Activated naive CD4-positive, alpha-beta T cell treated with anti-CD3 and anti-CD28 coated beads, Interleukin-2, amount 10 ng/mL, durations not matched to agents 7 days and 5 days (primary cell): ENCODE measurements at regions of chr6 and their contacts with region 1.

Region 1: GRCh38 chr6:36759148-36759759 is 61.6 kb downstream of the RAB44 start:
- DNase-seq: peak; percentile 85
- H3K4me3 Mint-ChIP-seq: no peak overlapping the region
- H3K27ac Mint-ChIP-seq: no peak overlapping the region
- H3K4me1 Mint-ChIP-seq: peaks cover 46% of the 10 kb centered on the region
- H3K27me3 Mint-ChIP-seq: peaks cover 9% of the 10 kb centered on the region

Region 2: GRCh38 chr6:36615018-36615761 is 144.1 kb before region 1 on chr6:
- CTCF ChIA-PET with region 1: interaction called, 69 read pairs
- DNase-seq: peak; percentile 52
- H3K4me3 Mint-ChIP-seq: no peak overlapping the region
- H3K27ac Mint-ChIP-seq: no peak overlapping the region
- H3K4me1 Mint-ChIP-seq: peaks cover 17% of the 10 kb centered on the region
- H3K27me3 Mint-ChIP-seq: no peaks in the 10 kb centered on the region

Region 3: DNA sequence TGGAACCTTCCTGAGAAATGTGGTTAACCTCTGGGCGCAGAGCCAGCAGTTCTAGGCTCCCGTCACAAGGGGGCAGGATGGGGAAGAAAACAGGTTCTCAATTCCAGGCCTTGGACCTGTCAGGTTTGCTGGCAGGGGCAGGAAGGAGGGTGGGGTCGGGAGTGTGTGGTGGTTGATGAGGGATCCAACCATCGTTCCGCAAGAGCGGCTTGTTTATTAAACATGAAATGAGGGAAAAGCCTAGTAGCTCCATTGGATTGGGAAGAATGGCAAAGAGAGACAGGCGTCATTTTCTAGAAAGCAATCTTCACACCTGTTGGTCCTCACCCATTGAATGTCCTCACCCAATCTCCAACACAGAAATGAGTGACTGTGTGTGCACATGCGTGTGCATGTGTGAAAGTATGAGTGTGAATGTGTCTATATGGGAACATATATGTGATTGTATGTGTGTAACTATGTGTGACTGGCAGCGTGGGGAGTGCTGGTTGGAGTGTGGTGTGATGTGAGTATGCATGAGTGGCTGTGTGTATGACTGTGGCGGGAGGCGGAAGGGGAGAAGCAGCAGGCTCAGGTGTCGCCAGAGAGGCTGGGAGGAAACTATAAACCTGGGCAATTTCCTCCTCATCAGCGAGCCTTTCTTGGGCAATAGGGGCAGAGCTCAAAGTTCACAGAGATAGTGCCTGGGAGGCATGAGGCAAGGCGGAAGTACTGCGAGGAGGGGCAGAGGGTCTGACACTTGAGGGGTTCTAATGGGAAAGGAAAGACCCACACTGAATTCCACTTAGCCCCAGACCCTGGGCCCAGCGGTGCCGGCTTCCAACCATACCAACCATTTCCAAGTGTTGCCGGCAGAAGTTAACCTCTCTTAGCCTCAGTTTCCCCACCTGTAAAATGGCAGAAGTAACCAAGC is 135.5 kb before region 1 on chr6:
- CTCF ChIA-PET with region 1: interaction called, 33 read pairs
- DNase-seq: peak; percentile 86
- H3K4me3 Mint-ChIP-seq: no peak overlapping the region
- H3K27ac Mint-ChIP-seq: peak overlapping the region; percentile 60
- H3K4me1 Mint-ChIP-seq: peaks cover 35% of the 10 kb centered on the region
- H3K27me3 Mint-ChIP-seq: peaks cover 3% of the 10 kb centered on the region

Region 4: DNA sequence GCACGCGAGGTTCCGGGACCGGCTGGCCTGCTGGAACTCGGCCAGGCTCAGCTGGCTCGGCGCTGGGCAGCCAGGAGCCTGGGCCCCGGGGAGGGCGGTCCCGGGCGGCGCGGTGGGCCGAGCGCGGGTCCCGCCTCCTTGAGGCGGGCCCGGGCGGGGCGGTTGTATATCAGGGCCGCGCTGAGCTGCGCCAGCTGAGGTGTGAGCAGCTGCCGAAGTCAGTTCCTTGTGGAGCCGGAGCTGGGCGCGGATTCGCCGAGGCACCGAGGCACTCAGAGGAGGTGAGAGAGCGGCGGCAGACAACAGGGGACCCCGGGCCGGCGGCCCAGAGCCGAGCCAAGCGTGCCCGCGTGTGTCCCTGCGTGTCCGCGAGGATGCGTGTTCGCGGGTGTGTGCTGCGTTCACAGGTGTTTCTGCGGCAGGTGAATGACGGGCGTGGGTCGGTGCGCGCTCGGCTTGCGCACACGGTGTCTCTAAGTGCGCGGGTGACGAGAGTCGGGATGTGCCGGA is 80.7 kb before region 1 on chr6 and contains the start of gene CDKN1A:
- CTCF ChIA-PET with region 1: interaction called, 30 read pairs
- DNase-seq: peak; percentile 86
- H3K4me3 Mint-ChIP-seq: peak within 1 kb of the TSS; percentile 95
- H3K27ac Mint-ChIP-seq: peak within 1 kb of the TSS; percentile 95
- H3K4me1 Mint-ChIP-seq: peaks cover 70% of the 10 kb centered on the region
- H3K27me3 Mint-ChIP-seq: peaks cover 42% of the 10 kb centered on the region

Region 5: DNA sequence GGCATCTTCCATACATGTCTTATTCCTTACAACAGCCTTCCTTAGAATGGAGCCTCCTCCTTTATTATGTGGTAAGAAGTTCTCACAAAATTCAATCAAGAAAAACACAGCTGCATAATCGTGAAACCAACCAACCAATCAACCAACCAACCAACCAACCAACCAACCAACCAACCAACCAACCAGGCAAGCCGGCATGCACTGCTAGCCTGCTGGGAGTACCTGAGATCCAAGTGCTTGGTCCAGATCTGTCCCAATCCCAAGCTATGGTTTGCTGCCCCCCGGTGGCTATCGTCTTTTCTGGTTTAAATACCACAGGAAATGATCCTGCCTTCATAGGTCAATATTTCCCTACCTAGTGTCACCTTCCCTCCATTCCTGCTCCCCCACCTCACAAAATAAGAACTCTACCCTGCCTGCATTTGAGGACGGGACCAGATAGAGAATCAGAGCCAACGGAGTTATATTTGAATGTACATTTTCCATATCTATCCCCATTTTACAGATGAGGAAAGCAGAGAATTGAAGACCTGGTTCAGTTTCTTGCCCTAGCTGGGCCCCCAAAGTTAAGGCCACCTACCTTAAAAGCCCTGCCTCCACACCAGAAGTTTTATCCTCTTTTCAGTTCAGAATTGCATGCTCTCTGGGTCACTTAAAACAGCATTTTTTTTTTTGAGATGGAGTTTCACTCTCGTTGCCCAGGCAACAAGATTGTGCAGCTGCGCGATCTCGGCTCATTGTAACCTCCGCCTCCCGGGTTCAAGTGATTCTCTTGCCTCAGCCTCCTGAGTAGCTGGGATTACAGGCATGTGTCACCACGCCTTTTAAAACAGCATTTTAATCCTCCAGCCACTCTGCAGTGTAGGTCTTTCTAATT is 34.5 kb before region 1 on chr6:
- CTCF ChIA-PET with region 1: interaction called, 41 read pairs
- DNase-seq: peak; percentile 76
- H3K4me3 Mint-ChIP-seq: no peak overlapping the region
- H3K27ac Mint-ChIP-seq: no peak overlapping the region
- H3K4me1 Mint-ChIP-seq: peaks cover 40% of the 10 kb centered on the region
- H3K27me3 Mint-ChIP-seq: peaks cover 24% of the 10 kb centered on the region

Region 6: DNA sequence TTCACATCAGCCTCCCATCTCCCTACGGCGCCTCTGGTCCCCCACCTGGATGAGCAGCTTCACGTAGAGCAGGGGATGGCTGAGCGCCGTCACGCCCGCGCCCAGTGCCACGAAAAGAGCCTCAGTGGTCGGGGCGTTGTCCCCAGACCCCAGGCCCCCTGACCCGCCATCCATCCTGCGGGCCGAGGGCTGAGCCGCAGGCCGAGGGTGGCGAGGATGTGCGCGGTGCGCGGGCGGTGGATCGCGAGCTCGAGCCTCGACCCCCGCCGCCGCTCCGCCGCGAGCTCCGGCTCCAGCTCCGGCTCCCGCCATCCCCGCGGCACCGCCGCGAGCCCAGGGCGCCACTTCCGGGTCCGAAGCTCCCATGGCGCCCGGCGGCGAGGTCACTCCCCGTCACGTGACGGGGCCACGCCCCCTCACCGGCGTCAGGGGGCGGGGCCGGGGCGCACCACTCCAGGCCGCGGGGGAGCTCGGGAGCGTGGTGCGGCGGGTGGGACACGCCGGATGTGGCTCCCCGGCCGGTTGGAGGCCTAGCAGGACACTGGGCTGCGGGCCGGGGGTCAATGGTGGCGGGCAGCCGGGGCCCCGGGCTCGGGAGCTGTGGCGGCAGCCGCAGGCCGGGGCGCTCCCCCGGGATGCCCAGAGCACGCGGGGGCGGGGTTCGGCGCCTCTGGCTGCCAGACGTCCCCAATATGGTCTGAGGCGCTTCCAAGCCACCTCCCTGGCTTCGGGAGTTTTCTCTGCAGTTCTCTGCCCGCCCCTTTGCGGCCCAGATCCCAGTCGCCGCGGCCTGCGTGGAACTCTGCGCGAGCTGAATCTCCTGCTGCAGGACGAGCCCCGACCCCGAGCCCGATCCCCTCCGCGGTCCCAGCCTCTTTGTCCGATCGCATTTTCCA is 226.8 kb after region 1 on chr6 and contains the start of gene MTCH1:
- CTCF ChIA-PET with region 1: no interaction called
- DNase-seq: peak; percentile 88
- H3K4me3 Mint-ChIP-seq: peak within 1 kb of the TSS; percentile 91
- H3K27ac Mint-ChIP-seq: peak within 1 kb of the TSS; percentile 95
- H3K4me1 Mint-ChIP-seq: peaks cover 24% of the 10 kb centered on the region
- H3K27me3 Mint-ChIP-seq: peaks cover 13% of the 10 kb centered on the region